ENCODE measurements at regions of chr14 and their contacts with region 1.

Region 1: DNA sequence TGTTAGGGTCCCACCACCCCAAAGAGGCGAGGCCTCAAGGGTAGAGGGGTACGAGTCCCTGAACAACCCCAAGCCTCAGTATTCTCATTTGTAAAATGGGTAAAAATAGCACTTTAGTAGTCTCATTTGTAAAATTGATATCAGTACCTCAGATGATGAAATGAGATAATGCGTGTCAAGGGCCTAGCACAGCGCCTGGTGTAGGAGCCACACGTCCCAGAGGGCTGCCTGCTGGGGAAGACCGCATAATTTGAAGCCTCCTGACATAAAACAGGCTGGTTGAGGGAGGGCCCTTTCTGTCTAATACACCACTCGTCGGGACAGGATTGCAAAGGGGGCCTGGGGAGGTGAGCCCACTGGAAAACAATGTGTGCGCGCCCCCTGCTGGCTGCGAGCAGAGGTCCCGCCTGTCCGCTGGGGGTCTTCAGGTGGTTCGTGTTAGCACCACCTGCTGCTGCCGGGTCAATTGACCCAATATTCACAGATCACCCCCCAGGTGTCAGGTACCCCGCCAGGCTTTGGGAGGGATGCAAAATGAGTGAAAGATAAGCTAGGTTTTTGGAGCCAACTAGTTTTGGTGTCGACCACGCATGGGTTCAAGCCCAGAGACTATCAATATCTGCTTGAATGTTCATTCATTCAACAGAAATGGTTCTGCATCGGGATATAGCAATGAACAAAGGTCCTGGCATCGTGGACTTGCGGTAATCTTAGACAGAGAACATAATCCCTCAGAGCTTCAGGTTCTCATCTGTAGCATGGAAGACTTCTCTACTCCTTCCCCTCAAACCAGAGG is 24.7 kb upstream of the IRF2BPL start:
- DNase-seq: peak; percentile 69 to 81 (median 76)
- ATAC-seq: peak; percentile 93
- H3K4me3 ChIP-seq: no peak overlapping the region
- H3K4me3 Mint-ChIP-seq: no peak overlapping the region
- H3K27ac ChIP-seq: no peak overlapping the region
- H3K27ac Mint-ChIP-seq: peak overlapping the region in 3 of 9 donors; percentile 17 to 79 (median 39)
- H3K4me1 ChIP-seq: peaks cover 0 to 7% of the 10 kb centered on the region in 2 donors
- H3K4me1 Mint-ChIP-seq: peaks cover 0 to 18% (median 7%) of the 10 kb centered on the region in 7 donors
- H3K27me3 ChIP-seq: no peaks in the 10 kb centered on the region
- H3K27me3 Mint-ChIP-seq: no peaks in the 10 kb centered on the region

Region 2: GRCh38 chr14:76191297-76191696 is 861.9 kb before region 1 on chr14:
- CTCF ChIA-PET with region 1: no interaction called
- POLR2A ChIA-PET with region 1: no interaction called
- intact Hi-C with region 1: no loop called
- DNase-seq: no peak
- ATAC-seq: peak; percentile 83
- H3K4me3 ChIP-seq: no peak overlapping the region
- H3K4me3 Mint-ChIP-seq: no peak overlapping the region
- H3K27ac ChIP-seq: no peak overlapping the region
- H3K27ac Mint-ChIP-seq: no peak overlapping the region
- H3K4me1 ChIP-seq: no peaks in the 10 kb centered on the region
- H3K4me1 Mint-ChIP-seq: peaks cover 4 to 27% (median 12%) of the 10 kb centered on the region in 7 donors
- H3K27me3 ChIP-seq: no peaks in the 10 kb centered on the region
- H3K27me3 Mint-ChIP-seq: no peaks in the 10 kb centered on the region

Region 3: DNA sequence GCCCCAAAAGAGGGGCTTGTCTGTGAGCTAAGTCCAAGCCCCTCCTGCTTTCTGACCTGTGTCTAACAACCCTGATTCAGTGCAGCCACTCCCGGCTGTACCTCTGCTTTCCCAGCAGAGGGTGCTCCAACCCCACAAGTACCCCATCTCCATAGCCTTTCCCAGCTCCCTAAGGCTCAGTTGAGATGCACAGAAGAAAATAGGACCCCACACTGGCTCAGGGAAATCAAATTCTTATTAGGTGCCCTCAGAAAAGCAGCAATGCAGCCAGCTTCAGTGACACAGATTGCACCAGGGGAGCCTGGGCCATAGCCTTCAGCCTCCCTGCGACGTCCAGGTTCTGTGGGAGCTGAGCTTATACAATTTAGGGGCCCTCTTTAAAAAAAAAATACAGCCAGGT is 177.2 kb before region 1 on chr14:
- CTCF ChIA-PET with region 1: interaction called, 34 read pairs
- POLR2A ChIA-PET with region 1: interaction called, 6 read pairs
- intact Hi-C with region 1: loop called (anchors 1 kb)
- DNase-seq: peak in 7 of 9 donors; percentile 23 to 50 (median 37)
- ATAC-seq: peak; percentile 73
- H3K4me3 ChIP-seq: no peak overlapping the region
- H3K4me3 Mint-ChIP-seq: no peak overlapping the region
- H3K27ac ChIP-seq: no peak overlapping the region
- H3K27ac Mint-ChIP-seq: peak overlapping the region in 1 of 9 donors; percentile 69
- H3K4me1 ChIP-seq: no peaks in the 10 kb centered on the region
- H3K4me1 Mint-ChIP-seq: peaks cover 0 to 3% (median 0%) of the 10 kb centered on the region in 7 donors
- H3K27me3 ChIP-seq: no peaks in the 10 kb centered on the region
- H3K27me3 Mint-ChIP-seq: no peaks in the 10 kb centered on the region

Region 4: GRCh38 chr14:76918751-76919543 is 134.3 kb before region 1 on chr14:
- CTCF ChIA-PET with region 1: interaction called, 98 read pairs
- POLR2A ChIA-PET with region 1: interaction called, 16 read pairs
- intact Hi-C with region 1: no loop called
- DNase-seq: no peak
- ATAC-seq: no peak
- H3K4me3 ChIP-seq: no peak overlapping the region
- H3K4me3 Mint-ChIP-seq: peak overlapping the region in 6 of 10 donors; percentile 27 to 67 (median 56)
- H3K27ac ChIP-seq: no peak overlapping the region
- H3K27ac Mint-ChIP-seq: peak overlapping the region in 2 of 9 donors; percentile 25 to 40
- H3K4me1 ChIP-seq: peaks cover 0 to 27% of the 10 kb centered on the region in 2 donors
- H3K4me1 Mint-ChIP-seq: peaks cover 12 to 65% (median 55%) of the 10 kb centered on the region in 7 donors
- H3K27me3 ChIP-seq: no peaks in the 10 kb centered on the region
- H3K27me3 Mint-ChIP-seq: peaks cover 0 to 1% (median 0%) of the 10 kb centered on the region in 5 donors

Region 5: DNA sequence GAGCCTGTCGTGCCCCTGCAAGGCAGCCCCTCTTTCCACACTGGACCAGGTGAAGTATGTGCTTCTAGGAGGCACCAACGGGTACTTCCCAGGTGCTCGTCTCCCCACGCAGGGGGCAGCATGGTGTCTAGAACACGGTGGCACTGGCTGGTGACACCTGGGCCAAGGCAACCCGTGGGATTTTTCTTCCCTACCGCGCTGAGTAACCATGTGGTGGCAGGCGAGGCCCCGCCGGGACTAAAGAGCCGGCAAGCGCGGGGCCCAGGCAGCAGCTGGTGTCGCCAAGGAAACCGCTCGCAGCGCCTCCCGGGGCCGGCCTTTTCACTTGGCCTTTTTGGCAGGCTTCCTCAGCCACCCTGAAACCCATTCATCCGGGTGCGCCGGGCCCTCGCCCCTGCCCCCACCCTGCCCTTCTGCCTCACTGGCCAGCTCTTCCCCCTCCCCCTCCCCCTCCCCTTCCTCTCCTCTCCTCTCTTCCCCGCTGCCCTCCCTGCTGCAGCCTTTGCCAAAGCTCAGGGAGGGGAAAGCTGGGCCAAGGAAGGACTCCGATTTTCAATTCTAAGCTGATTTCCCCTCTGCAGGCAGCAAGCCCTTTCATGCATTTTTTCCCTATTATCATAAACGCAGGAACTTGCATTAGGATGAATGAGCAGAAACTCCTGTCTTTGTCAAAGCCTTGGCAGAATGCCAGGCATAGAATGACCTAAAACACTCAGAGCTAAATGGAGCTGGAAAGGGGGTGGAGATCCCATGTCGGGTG is 106.0 kb before region 1 on chr14:
- CTCF ChIA-PET with region 1: interaction called, 16 read pairs
- POLR2A ChIA-PET with region 1: interaction called, 3 read pairs
- intact Hi-C with region 1: loop called (anchors 1 kb)
- DNase-seq: peak; percentile 53 to 76 (median 68)
- ATAC-seq: peak; percentile 96
- H3K4me3 ChIP-seq: no peak overlapping the region
- H3K4me3 Mint-ChIP-seq: peak overlapping the region in 9 of 10 donors; percentile 20 to 65 (median 50)
- H3K27ac ChIP-seq: peak overlapping the region; percentile 20
- H3K27ac Mint-ChIP-seq: peak overlapping the region in 7 of 9 donors; percentile 28 to 83 (median 63)
- H3K4me1 ChIP-seq: peaks cover 6 to 16% of the 10 kb centered on the region in 2 donors
- H3K4me1 Mint-ChIP-seq: peaks cover 20 to 56% (median 35%) of the 10 kb centered on the region in 7 donors
- H3K27me3 ChIP-seq: no peaks in the 10 kb centered on the region
- H3K27me3 Mint-ChIP-seq: no peaks in the 10 kb centered on the region

Region 6: GRCh38 chr14:76962303-76962660 is 91.0 kb before region 1 on chr14:
- CTCF ChIA-PET with region 1: interaction called, 18 read pairs
- POLR2A ChIA-PET with region 1: interaction called, 5 read pairs
- intact Hi-C with region 1: loop called in 1 of 2 experiments (anchors 1 kb)
- DNase-seq: no peak
- ATAC-seq: no peak
- H3K4me3 ChIP-seq: peak overlapping the region; percentile 82
- H3K4me3 Mint-ChIP-seq: peak overlapping the region; percentile 74 to 86 (median 84)
- H3K27ac ChIP-seq: peak overlapping the region; percentile 87
- H3K27ac Mint-ChIP-seq: peak overlapping the region; percentile 87 to 99 (median 91)
- H3K4me1 ChIP-seq: peaks cover 39 to 59% of the 10 kb centered on the region in 2 donors
- H3K4me1 Mint-ChIP-seq: peaks cover 41 to 89% (median 79%) of the 10 kb centered on the region in 7 donors
- H3K27me3 ChIP-seq: no peaks in the 10 kb centered on the region
- H3K27me3 Mint-ChIP-seq: peaks cover 0 to 8% (median 0%) of the 10 kb centered on the region in 5 donors

Region 7: DNA sequence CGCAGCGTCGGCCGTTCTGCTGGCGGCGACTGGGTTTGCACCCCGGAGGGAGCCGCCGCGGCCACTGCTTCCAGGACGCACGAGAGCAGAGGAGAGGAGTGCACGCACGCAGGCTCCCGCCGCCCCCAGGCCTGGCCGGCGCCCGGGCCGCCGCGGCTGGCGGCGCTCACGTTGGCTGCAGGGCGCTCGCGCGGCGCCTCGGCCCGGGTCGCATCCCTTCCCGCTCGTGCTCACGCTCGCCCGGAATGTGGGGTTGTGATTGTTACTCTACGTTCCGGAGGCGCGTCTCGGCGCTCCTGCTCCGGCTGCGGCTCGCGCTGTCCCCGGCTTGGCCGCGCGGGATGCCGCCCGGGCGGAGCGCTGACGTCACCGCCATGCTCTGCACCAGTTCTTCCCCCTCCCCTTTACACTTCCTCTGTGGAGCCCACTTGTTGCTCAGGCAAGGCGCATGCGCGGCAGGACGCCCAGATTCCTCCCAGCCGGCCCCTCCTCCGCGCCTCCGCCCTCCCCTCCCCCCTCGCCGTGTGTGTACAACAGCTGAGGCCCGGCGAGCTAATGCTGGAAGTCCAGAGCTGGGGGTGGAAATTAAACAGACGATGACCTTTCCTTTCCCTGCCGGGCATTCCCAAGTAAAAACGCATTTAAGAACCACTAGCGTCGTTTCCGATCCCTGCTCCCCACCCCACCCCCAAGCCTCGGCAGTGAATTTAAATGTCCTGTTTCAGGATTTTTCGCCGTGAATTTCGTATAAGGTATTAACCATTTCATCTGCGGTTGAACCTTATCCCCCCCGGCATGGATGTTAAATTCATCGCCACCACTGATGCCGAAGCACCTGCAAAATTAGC is 24.6 kb before region 1 on chr14 and contains the start of gene IRF2BPL:
- CTCF ChIA-PET with region 1: interaction called, 22 read pairs
- POLR2A ChIA-PET with region 1: interaction called, 24 read pairs
- intact Hi-C with region 1: loop called in 1 of 2 experiments (anchors 1 kb)
- DNase-seq: peak; percentile 90 to 96 (median 94)
- ATAC-seq: peak; percentile 82
- H3K4me3 ChIP-seq: peak within 1 kb of the TSS; percentile 81
- H3K4me3 Mint-ChIP-seq: peak within 1 kb of the TSS; percentile 93 to 99 (median 98)
- H3K27ac ChIP-seq: peak within 1 kb of the TSS; percentile 98
- H3K27ac Mint-ChIP-seq: peak within 1 kb of the TSS; percentile 97 to 100 (median 99)
- H3K4me1 ChIP-seq: peaks cover 43 to 57% of the 10 kb centered on the region in 2 donors
- H3K4me1 Mint-ChIP-seq: peaks cover 33 to 65% (median 58%) of the 10 kb centered on the region in 7 donors
- H3K27me3 ChIP-seq: no peaks in the 10 kb centered on the region
- H3K27me3 Mint-ChIP-seq: no peaks in the 10 kb centered on the region
- total RNA-seq, gene IRF2BPL: 30.2 to 45.2 (median 34.6) TPM

Region 8: GRCh38 chr14:77040059-77040740 is 13.0 kb before region 1 on chr14:
- CTCF ChIA-PET with region 1: interaction called, 13 read pairs
- POLR2A ChIA-PET with region 1: interaction called, 32 read pairs
- intact Hi-C with region 1: loop called in 1 of 2 experiments (anchors 1 kb)
- DNase-seq: peak; percentile 86 to 99 (median 99)
- ATAC-seq: peak; percentile 87
- H3K4me3 ChIP-seq: peak overlapping the region; percentile 78
- H3K4me3 Mint-ChIP-seq: peak overlapping the region; percentile 76 to 97 (median 87)
- H3K27ac ChIP-seq: peak overlapping the region; percentile 97
- H3K27ac Mint-ChIP-seq: peak overlapping the region; percentile 97 to 100 (median 99)
- H3K4me1 ChIP-seq: peaks cover 57 to 77% of the 10 kb centered on the region in 2 donors
- H3K4me1 Mint-ChIP-seq: peaks cover 50 to 97% (median 89%) of the 10 kb centered on the region in 7 donors
- H3K27me3 ChIP-seq: no peaks in the 10 kb centered on the region
- H3K27me3 Mint-ChIP-seq: no peaks in the 10 kb centered on the region

Measured in naive thymus-derived CD4-positive, alpha-beta T cell (primary cell).